CD8-positive, alpha-beta memory T cell (primary cell): ENCODE measurements at regions of chr11 and their contacts with region 1.

Region 1: GRCh38 chr11:118359295-118359958 is at the start of gene UBE4A:
- DNase-seq: peak; percentile 93 to 99 (median 95)
- H3K4me3 ChIP-seq: peak within 1 kb of the TSS; percentile 96
- H3K4me3 Mint-ChIP-seq: peak within 1 kb of the TSS; percentile 91 to 99 (median 97)
- H3K27ac ChIP-seq: peak within 1 kb of the TSS; percentile 95
- H3K27ac Mint-ChIP-seq: peak within 1 kb of the TSS; percentile 95 to 100 (median 98)
- H3K4me1 ChIP-seq: peaks cover 35% of the 10 kb centered on the region
- H3K4me1 Mint-ChIP-seq: peaks cover 41 to 57% (median 56%) of the 10 kb centered on the region in 3 donors
- H3K27me3 ChIP-seq: no peaks in the 10 kb centered on the region
- H3K27me3 Mint-ChIP-seq: peaks cover 0 to 7% of the 10 kb centered on the region in 2 donors
- total RNA-seq, gene UBE4A: 55.9 to 56.8 TPM

Region 2: DNA sequence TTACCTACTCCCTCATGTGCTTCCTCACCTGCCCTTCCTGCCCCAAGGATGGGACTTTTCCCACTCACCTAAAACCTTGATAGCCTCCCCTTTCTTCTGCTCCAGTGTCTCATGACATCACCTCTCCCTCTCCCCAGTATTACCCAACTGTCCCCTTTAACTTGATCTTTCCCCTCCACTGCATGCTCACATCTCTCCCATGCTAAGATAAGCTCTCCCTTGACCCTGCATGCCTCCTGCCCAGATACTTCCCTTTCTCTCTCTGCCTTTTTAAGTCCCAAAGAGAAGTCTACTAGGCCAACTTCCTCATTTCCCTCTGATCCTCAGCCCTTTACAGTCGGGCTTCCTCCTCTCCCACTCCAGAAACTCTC is 40.1 kb before region 1 on chr11:
- CTCF ChIA-PET with region 1: no interaction called
- POLR2A ChIA-PET with region 1: no interaction called
- DNase-seq: no peak
- H3K4me3 ChIP-seq: peak overlapping the region; percentile 17
- H3K4me3 Mint-ChIP-seq: peak overlapping the region in 6 of 7 donors; percentile 6 to 62 (median 40)
- H3K27ac ChIP-seq: peak overlapping the region; percentile 10
- H3K27ac Mint-ChIP-seq: peak overlapping the region; percentile 78 to 94 (median 88)
- H3K4me1 ChIP-seq: peaks cover 74% of the 10 kb centered on the region
- H3K4me1 Mint-ChIP-seq: peaks cover 73 to 95% (median 86%) of the 10 kb centered on the region in 3 donors
- H3K27me3 ChIP-seq: no peaks in the 10 kb centered on the region
- H3K27me3 Mint-ChIP-seq: no peaks in the 10 kb centered on the region

Region 3: GRCh38 chr11:118380571-118380970 is 21.1 kb after region 1 on chr11:
- CTCF ChIA-PET with region 1: interaction called, 5 read pairs
- POLR2A ChIA-PET with region 1: interaction called, 11 read pairs
- DNase-seq: no peak
- H3K4me3 ChIP-seq: no peak overlapping the region
- H3K4me3 Mint-ChIP-seq: no peak overlapping the region
- H3K27ac ChIP-seq: no peak overlapping the region
- H3K27ac Mint-ChIP-seq: peak overlapping the region in 1 of 8 donors; percentile 36
- H3K4me1 ChIP-seq: no peaks in the 10 kb centered on the region
- H3K4me1 Mint-ChIP-seq: no peaks in the 10 kb centered on the region
- H3K27me3 ChIP-seq: no peaks in the 10 kb centered on the region
- H3K27me3 Mint-ChIP-seq: no peaks in the 10 kb centered on the region